ENCODE measurements at regions of chr4 and their contacts with region 1.

Region 1: DNA sequence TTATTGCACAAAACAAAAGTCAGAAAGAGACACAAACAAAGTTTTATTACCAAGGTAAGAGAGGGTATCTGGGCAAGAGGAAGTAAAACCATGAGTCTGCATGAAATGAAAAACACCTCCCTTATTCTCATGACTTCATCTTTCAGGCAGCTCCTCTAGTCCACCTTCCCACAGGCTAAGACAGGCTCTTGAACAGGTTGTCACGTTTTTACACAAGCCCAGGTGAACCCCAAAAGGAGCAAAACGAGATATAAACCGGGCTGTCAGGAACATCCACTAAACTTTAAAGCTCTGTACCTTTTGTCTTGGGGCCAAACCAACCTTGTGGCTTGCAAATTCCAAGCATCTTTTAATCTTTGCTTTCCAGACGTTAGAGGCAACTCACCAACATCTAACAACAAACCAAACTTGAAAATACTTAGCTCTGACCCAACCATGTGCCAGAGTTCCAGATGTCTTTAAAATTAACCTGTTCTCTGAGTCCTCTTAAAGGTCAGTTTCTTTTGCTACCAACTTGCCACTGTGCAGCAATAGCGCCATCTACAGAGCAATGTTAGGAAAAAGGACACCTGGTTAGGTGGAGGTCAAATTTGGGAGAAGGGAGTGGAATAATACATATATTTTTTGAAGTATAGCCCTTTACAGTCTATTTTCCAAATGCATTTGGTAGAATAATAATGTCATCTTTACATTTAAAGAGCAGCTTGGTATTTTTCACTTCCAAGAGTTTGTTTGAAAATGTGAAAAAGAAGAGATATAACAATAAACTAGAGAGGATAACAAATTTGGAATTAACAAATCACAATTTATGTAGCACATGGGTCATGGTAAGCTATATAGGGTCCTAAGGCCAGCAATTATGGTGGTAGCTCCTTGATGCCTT is 73.1 kb downstream of the QRFPR start:
- DNase-seq: peak; percentile 87
- H3K4me3 Mint-ChIP-seq: no peak overlapping the region
- H3K27ac Mint-ChIP-seq: no peak overlapping the region
- H3K4me1 Mint-ChIP-seq: peaks cover 10% of the 10 kb centered on the region
- H3K27me3 Mint-ChIP-seq: no peaks in the 10 kb centered on the region
- CTCF ChIP-seq: peak; percentile 79

Region 2: DNA sequence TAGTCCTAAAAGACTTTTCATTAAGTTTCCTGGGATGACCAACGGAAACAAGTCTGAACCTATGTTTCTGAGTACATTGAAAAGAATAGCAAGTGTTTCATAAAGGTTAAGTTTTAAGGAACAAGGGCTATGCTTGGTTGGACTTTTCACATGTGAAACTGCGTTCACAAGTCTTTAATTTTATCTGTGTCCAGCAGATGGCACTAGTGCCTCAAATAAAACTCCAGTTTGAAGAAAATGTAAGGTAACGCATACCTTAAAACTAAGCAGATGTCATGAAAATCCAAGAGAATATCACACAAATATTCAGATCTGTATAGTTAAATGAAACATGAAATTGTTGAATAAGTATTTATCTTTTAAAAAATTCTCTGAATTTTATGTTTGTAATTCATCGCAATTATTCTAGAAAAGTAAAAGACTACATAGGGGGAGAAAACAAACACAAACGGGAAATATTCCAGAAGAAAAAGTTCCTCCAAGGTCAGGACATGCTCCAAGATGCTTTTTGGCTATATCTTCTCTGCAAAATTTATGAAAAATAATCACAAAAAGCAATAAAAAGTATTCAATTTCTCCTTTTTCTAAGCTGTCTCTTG is 1151.5 kb before region 1 on chr4:
- CTCF ChIA-PET with region 1: interaction called, 3 read pairs
- POLR2A ChIA-PET with region 1: interaction called, 4 read pairs
- intact Hi-C with region 1: loop called (anchors 2 kb)
- DNase-seq: peak; percentile 75
- H3K4me3 Mint-ChIP-seq: no peak overlapping the region
- H3K27ac Mint-ChIP-seq: no peak overlapping the region
- H3K4me1 Mint-ChIP-seq: no peaks in the 10 kb centered on the region
- H3K27me3 Mint-ChIP-seq: no peaks in the 10 kb centered on the region
- CTCF ChIP-seq: peak; percentile 60

Region 3: DNA sequence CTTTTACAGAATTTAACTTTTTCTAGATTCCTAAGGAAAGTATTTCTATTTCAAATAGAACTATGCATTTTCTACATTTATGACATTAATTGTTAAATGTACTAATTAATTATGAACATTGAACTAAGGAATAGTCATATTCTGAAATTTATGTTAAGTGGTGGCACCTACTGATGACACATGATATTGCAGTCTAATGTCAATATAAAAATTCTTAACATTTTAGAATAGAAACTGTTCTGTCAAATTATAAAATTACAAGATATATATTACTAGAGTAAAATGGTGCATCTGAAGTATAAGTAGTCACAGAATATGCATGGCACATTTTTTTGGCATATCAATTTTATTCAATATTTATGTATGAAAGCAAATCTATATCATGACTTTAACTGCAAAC is 195.2 kb before region 1 on chr4:
- CTCF ChIA-PET with region 1: interaction called, 10 read pairs
- POLR2A ChIA-PET with region 1: no interaction called
- intact Hi-C with region 1: no loop called
- DNase-seq: peak; percentile 8
- H3K4me3 Mint-ChIP-seq: no peak overlapping the region
- H3K27ac Mint-ChIP-seq: no peak overlapping the region
- H3K4me1 Mint-ChIP-seq: no peaks in the 10 kb centered on the region
- H3K27me3 Mint-ChIP-seq: no peaks in the 10 kb centered on the region
- CTCF ChIP-seq: no peak

Region 4: GRCh38 chr4:121243485-121243884 is 64.2 kb before region 1 on chr4:
- CTCF ChIA-PET with region 1: interaction called, 11 read pairs
- POLR2A ChIA-PET with region 1: no interaction called
- intact Hi-C with region 1: no loop called
- DNase-seq: no peak
- H3K4me3 Mint-ChIP-seq: no peak overlapping the region
- H3K27ac Mint-ChIP-seq: no peak overlapping the region
- H3K4me1 Mint-ChIP-seq: no peaks in the 10 kb centered on the region
- H3K27me3 Mint-ChIP-seq: no peaks in the 10 kb centered on the region
- CTCF ChIP-seq: no peak

Region 5: DNA sequence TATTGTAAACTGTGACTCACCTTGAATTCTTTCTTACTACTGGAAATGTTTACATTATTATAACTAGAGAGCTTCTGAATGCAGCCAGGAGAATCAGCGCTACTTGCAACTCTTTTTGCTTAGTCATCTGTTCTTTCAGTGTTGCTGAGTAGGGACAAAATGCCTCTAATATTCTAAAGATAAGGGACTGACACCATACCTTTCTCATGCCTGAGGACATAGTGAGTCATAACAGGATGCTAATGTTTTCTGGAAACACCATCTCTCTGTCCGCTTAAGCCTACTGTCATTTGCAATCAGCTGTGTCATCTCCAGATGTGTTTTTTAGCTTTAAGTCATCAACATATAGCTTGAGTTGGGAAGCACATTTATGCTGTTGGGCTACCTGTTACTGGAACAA is 35.2 kb before region 1 on chr4:
- CTCF ChIA-PET with region 1: interaction called, 28 read pairs
- POLR2A ChIA-PET with region 1: interaction called, 5 read pairs
- intact Hi-C with region 1: no loop called
- DNase-seq: peak; percentile 84
- H3K4me3 Mint-ChIP-seq: no peak overlapping the region
- H3K27ac Mint-ChIP-seq: peak overlapping the region; percentile 14
- H3K4me1 Mint-ChIP-seq: peaks cover 17% of the 10 kb centered on the region
- H3K27me3 Mint-ChIP-seq: no peaks in the 10 kb centered on the region
- CTCF ChIP-seq: no peak

Region 6: GRCh38 chr4:121283319-121283718 is 24.4 kb before region 1 on chr4:
- CTCF ChIA-PET with region 1: interaction called, 17 read pairs
- POLR2A ChIA-PET with region 1: interaction called, 3 read pairs
- intact Hi-C with region 1: no loop called
- DNase-seq: no peak
- H3K4me3 Mint-ChIP-seq: no peak overlapping the region
- H3K27ac Mint-ChIP-seq: no peak overlapping the region
- H3K4me1 Mint-ChIP-seq: no peaks in the 10 kb centered on the region
- H3K27me3 Mint-ChIP-seq: no peaks in the 10 kb centered on the region
- CTCF ChIP-seq: no peak